ENCODE measurements at regions of chr7 and their contacts with region 1.

Region 1: DNA sequence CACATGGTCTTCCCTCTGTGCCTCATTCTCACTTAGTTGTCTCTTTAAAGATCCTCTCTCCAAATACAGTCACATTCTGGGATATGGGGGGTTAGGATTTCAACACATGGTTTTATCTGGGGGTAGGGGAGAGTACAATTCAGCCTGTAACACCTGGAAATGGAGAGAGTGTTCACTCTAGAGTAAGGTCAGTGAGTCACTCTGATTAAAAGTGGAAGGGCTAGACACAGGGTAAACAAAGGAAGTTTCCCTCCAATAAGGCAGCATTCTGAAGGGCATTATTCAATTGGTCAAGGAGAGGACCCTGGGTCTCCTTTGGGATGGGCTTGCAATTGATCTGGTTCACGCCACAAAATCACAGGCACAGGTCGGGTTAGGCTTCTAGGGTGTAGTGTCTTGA is 232.8 kb upstream of the NPSR1 start:
- DNase-seq: no peak

Region 2: GRCh38 chr7:34373940-34374339 is 51.2 kb before region 1 on chr7:
- intact Hi-C with region 1: loop called (anchors 5 kb)
- DNase-seq: no peak

Measured in cardiac septum (tissue), 1 donor.